Right ventricle myocardium inferior (tissue), 1 donor: ENCODE measurements at regions of chr12 and their contacts with region 1.

Region 1: GRCh38 chr12:34218165-34219045 is 196.1 kb downstream of the ALG10 start:
- DNase-seq: no peak
- ATAC-seq: peak; percentile 78

Region 2: GRCh38 chr12:34033628-34034282 is 184.7 kb before region 1 on chr12:
- intact Hi-C with region 1: loop called (anchors 5 kb)
- DNase-seq: no peak
- ATAC-seq: no peak

Region 3: GRCh38 chr12:34126239-34126641 is 92.2 kb before region 1 on chr12:
- intact Hi-C with region 1: loop called (anchors 2 kb)
- DNase-seq: no peak
- ATAC-seq: no peak

Region 4: DNA sequence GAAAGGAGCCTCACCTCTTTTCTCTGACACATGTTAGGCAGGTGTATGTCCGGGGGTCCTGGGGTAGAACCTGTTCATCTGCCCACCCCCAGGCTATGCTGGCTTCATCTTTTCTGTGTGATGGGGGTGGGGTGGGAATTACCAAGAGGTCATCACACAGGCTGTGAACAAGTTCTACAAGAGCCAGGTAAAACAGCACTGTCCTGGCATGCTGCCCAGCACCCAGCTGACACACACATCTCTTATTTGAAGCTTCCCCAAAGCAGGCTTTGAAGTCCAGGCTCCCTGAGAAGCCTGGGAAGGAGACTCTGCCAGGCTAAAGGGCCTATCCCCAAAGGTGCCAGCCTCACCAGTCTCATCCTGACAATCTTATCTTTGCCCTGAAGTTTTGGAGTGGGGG is 55.0 kb before region 1 on chr12:
- intact Hi-C with region 1: no loop called
- DNase-seq: no peak
- ATAC-seq: no peak

Region 5: DNA sequence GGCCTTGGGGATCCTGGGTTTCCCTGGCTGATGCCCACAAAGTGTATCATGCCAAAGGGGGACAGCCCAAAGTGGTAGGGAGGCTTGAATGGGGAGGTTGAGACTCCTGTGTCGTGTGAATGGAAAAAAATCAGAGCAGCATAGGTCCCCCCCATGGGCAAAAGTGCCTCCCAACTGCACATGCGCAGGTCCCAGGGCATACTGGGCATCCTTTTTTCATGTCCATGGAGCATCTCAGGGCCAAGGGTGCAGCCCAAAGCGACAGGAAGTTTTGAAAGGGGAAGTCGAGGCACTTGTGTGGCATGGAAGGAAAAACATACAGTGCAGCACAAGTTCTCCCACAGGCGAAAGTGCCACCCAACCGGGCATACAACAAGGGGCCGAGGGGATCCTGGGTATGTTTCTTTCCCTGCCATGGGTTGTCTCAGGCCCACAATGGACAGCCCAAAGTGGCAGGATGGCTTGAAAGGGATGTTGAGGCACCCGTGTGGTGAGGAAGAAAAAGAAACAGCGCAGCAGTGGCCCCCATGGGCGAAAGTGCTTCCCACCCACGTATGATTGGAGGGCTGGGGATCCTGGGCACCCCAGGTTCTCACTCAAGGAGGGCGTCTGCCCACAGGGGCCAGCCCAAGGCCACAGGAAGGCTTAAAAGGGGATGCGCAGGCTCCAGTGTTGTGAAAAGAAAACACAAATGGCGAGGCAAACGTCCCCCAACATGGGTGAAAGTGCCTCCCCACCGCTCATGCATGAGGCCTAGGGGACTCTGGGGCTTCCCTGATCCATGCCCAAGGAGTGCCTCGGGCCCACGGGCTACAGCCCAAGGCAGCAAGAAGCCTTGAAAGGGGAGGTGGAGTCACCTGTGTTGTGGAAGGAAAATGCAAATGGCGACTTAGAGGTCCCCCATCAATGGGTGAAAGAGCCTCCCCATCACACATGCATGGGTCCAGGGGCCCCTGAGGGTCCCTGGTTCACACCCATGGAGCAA is 377.6 kb after region 1 on chr12:
- intact Hi-C with region 1: no loop called
- DNase-seq: peak; percentile 45
- ATAC-seq: no peak